A549 (cell line): ENCODE measurements at regions of chr16 and their contacts with region 1.

Region 1: GRCh38 chr16:10964039-10964890 is 19.9 kb downstream of the CLEC16A start:
- DNase-seq: peak; percentile 70 to 77
- ATAC-seq: peak; percentile 93 to 99
- H3K4me3 ChIP-seq: no peak overlapping the region
- H3K27ac ChIP-seq: no peak overlapping the region
- H3K4me1 ChIP-seq: 0 out of 3 replicates have a peak, but pooled peaks cover 3% of the 10 kb centered on the region
- CTCF ChIP-seq: peak; percentile 93
- EP300 ChIP-seq: no peak
- POLR2A ChIP-seq: no peak
- RAD21 ChIP-seq: peak; percentile 87 to 88

Region 2: DNA sequence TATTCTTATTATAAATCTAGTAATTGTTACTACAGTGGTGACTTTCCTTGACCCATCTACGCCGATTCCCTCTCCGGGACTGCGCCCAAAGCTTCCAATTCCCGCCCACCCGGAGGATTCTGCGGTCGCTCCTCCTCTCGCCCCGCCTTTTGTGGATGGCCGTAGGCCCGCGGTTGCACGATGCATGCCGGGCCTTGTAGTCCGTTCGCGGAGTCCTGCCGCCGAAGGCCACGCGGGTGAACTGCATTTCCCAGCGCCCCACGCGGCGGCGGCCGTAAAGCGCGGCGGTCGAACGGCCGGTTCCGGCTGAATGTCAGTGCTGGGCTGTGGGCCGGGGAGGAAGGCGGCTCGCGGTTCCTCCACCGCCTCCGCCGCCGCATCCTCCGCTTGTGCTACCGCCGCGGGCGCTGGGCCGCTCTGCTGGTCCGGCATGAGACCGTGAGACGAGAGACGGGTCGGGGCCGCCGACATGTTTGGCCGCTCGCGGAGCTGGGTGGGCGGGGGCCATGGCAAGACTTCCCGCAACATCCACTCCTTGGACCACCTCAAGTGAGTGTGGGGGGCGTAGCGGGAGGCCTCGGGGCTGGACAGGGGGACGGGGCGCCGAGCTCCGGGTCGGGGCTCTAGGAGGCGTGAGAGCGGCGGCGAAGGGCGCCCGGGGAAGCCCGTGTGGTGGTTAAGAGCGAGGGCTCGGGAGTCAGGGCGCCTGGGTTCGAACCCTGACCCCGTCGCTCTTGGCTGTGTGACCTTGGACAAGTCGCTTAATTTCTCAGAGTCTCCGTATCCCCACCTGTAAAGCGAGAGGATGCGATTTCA is 19.8 kb before region 1 on chr16 and contains the start of gene CLEC16A:
- CTCF ChIA-PET with region 1: interaction called, 284 read pairs
- POLR2A ChIA-PET with region 1: interaction called, 3 read pairs
- DNase-seq: peak; percentile 94 to 97
- ATAC-seq: peak; percentile 72 to 91
- H3K4me3 ChIP-seq: peak within 1 kb of the TSS; percentile 87
- H3K27ac ChIP-seq: peak within 1 kb of the TSS; percentile 80 to 90
- H3K4me1 ChIP-seq: peaks cover 36% of the 10 kb centered on the region
- CTCF ChIP-seq: no peak
- EP300 ChIP-seq: no peak
- POLR2A ChIP-seq: peak; percentile 82
- RAD21 ChIP-seq: no peak
- polyA plus RNA-seq, gene CLEC16A: 10.4 and 10.6 TPM in 2 replicates

Region 3: DNA sequence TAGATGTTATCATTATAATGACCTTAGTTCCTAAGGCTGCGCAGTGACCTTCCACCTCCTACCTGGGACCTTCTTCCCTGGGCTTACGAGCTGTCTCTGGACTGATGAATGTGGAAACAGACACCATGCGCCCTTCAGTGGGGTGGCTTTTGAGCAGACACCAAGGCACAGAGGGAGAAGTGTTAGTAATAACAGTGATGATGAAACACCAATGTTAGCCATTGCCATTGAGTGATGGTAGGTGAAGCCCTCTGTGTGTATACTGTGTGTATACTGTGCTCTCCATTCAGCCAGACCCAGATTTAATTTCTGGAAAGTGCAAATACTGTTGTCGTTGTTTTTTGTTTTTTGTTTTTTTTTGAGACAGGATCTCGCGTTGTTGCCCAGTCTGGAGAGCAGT is 24.6 kb after region 1 on chr16:
- CTCF ChIA-PET with region 1: interaction called, 27 read pairs
- POLR2A ChIA-PET with region 1: no interaction called
- DNase-seq: no peak
- ATAC-seq: no peak
- H3K4me3 ChIP-seq: no peak overlapping the region
- H3K27ac ChIP-seq: no peak overlapping the region
- H3K4me1 ChIP-seq: peaks cover 21% of the 10 kb centered on the region
- CTCF ChIP-seq: no peak
- EP300 ChIP-seq: no peak
- POLR2A ChIP-seq: no peak
- RAD21 ChIP-seq: no peak

Region 4: DNA sequence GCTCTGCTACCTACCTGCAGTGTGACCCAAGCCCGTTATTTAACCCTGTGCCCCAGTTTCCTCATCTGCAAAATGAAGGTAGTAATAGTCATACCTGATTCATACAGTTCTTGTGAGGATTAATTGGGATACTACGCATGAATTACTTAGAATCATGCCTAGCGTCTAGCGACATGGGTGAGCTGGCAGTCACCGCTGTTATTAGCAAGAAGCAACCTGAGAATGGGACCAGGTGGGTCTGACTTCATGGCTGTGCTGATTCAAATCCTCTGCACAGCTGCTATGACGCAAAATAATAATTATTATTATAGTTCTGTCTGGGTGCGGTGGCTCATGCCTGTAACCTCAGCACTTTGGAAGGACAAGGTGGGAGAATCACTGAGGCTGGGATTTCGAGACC is 283.9 kb after region 1 on chr16:
- CTCF ChIA-PET with region 1: interaction called, 364 read pairs
- POLR2A ChIA-PET with region 1: no interaction called
- DNase-seq: no peak
- ATAC-seq: no peak
- H3K4me3 ChIP-seq: no peak overlapping the region
- H3K27ac ChIP-seq: no peak overlapping the region
- H3K4me1 ChIP-seq: no peaks in the 10 kb centered on the region
- CTCF ChIP-seq: no peak
- EP300 ChIP-seq: no peak
- POLR2A ChIP-seq: no peak
- RAD21 ChIP-seq: no peak

Region 5: DNA sequence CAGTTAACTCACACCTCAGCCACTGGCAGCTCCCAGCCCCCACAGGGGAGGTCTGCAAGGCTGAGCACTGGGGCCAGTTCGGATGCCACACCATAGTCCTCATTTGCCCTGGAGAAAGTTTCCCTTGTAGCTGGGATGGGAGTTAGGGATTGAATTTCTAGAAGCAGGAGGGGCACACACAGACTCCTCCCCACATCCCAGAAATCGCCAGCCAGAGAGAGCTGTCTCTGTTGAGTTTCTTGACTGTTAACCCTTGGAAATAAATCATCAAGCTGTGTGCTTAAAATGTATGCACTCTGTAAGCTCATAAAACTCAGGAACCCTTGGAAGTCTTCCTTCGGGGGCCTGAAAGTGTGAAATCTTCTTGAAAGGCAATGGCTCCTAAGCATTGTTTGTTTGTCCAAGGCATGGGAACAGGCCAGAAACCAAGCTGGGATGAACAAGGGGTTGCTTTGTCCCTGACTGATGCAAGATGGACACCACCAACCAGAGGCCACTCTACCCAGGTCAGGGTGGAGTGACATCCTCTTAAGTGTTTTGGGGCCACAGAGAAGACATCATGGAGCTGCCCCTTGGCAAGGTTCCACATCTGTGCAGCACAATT is 309.6 kb after region 1 on chr16:
- CTCF ChIA-PET with region 1: interaction called, 20 read pairs
- POLR2A ChIA-PET with region 1: no interaction called
- DNase-seq: peak in 1 of 2 experiments; percentile 16
- ATAC-seq: peak in 1 of 2 experiments; percentile 18; a peak in 1 of 6 replicates
- H3K4me3 ChIP-seq: no peak overlapping the region
- H3K27ac ChIP-seq: no peak overlapping the region
- H3K4me1 ChIP-seq: no peaks in the 10 kb centered on the region
- CTCF ChIP-seq: no peak
- EP300 ChIP-seq: no peak
- POLR2A ChIP-seq: no peak
- RAD21 ChIP-seq: no peak

Region 6: DNA sequence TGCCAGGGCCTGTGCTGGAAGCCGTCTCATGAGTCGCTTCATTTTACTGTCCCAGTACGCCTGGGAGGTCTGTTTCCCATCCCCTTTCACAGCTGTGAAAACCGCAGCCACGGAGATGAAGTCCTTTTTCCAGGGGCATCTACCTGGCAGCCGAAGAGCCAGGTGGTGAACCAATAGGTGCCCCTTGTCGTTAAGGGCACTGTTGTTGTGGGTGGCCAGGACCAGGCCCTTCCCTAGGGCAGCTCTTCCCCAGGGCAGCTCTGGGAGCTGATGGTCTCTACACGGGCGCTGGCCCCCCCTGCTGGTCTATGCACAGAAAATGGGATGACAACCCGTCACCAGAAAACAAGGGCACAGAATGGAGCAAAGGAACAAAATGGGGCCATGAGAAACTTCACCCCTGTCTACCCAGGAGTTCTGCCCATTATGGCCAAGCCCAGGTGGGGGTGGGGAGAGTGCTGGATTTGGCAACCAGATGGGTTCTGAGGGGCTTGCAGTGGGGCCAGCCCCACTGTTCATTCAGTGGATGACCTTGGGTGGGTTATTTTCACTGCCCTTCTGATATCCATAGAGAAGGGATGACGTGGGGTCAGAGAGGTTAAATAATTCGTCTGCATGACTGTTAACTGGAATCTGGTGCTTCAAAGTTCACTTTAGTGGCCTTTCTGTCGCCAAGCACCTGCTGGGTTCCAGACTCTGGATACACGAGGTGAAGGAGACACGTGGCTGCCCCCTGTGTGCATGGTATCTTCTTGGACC is 392.5 kb after region 1 on chr16:
- CTCF ChIA-PET with region 1: interaction called, 32 read pairs
- POLR2A ChIA-PET with region 1: no interaction called
- DNase-seq: peak; percentile 58 to 74
- ATAC-seq: peak; percentile 80 to 90
- H3K4me3 ChIP-seq: no peak overlapping the region
- H3K27ac ChIP-seq: peak overlapping the region in 1 of 2 experiments; percentile 58; a peak in 2 of 6 replicates
- H3K4me1 ChIP-seq: peaks cover 18% of the 10 kb centered on the region
- CTCF ChIP-seq: peak; percentile 60
- EP300 ChIP-seq: no peak
- POLR2A ChIP-seq: no peak
- RAD21 ChIP-seq: peak; percentile 77 to 79

Region 7: GRCh38 chr16:11386791-11387546 is 422.7 kb after region 1 on chr16:
- CTCF ChIA-PET with region 1: interaction called, 37 read pairs
- POLR2A ChIA-PET with region 1: no interaction called
- DNase-seq: peak; percentile 30 to 60
- ATAC-seq: peak; percentile 70 to 91; a peak in 5 of 6 replicates
- H3K4me3 ChIP-seq: no peak overlapping the region
- H3K27ac ChIP-seq: 0 out of 6 replicates have a peak overlapping the region, but pooled peaks of 1 of the 2 experiments have one; percentile 19
- H3K4me1 ChIP-seq: no peaks in the 10 kb centered on the region
- CTCF ChIP-seq: peak; percentile 45
- EP300 ChIP-seq: no peak
- POLR2A ChIP-seq: no peak
- RAD21 ChIP-seq: peak; percentile 32 to 33; a peak in 2 of 5 replicates